Mammary epithelial cell (primary cell): ENCODE measurements at regions of chr19 and their contacts with region 1.

Region 1: GRCh38 chr19:31214086-31214485 is 135.2 kb downstream of the TSHZ3 start:
- DNase-seq: peak; percentile 99
- H3K4me3 ChIP-seq: no peak overlapping the region
- H3K27ac ChIP-seq: peak overlapping the region; percentile 77
- H3K4me1 ChIP-seq: peaks cover 20% of the 10 kb centered on the region
- H3K27me3 ChIP-seq: no peaks in the 10 kb centered on the region
- CTCF ChIP-seq: no peak

Region 2: GRCh38 chr19:31254180-31254551 is 40.1 kb after region 1 on chr19:
- CTCF ChIA-PET with region 1: no interaction called
- dilution Hi-C with region 1: no loop called
- in situ Hi-C with region 1: no loop called
- intact Hi-C with region 1: loop called (anchors 2 kb)
- DNase-seq: peak; percentile 86
- H3K4me3 ChIP-seq: no peak overlapping the region
- H3K27ac ChIP-seq: no peak overlapping the region
- H3K4me1 ChIP-seq: peaks cover 17% of the 10 kb centered on the region
- H3K27me3 ChIP-seq: no peaks in the 10 kb centered on the region
- CTCF ChIP-seq: no peak

Region 3: DNA sequence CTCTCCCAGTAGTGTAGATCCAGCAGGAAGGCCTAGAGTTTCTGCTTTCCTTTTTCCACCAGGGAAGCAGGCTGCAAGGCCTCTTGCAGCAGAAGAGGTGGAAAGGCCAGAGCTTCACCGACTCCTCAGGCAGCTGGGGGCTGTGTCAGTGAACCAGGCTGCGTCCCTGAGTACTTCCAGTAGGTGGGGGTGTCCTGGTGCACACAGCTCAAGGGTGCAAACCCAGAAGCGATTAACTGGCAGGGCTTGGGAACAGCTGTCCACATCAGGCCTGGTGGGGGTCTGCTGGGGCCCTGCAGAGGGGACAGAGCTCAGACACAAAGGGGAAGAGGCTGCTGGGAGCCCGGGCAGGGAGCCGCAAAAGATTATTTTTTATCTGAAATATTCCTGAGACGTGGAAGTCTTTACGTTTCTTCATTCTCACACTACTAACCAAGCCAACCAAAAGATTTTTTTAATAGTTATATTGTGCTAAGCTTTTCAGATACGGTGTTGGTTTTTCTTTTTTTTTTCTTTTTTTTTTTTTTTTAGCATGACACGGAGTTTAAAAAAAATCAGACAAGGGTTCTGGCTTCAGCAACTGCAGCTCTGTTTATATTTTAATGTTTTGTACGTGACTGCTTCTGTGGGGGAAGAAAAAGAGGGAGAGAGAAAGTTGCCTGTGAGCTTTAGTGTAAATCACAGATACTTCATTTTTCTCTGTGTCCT is 124.1 kb after region 1 on chr19:
- CTCF ChIA-PET with region 1: no interaction called
- dilution Hi-C with region 1: loop called (anchors 5 kb)
- in situ Hi-C with region 1: no loop called
- intact Hi-C with region 1: no loop called
- DNase-seq: no peak
- H3K4me3 ChIP-seq: no peak overlapping the region
- H3K27ac ChIP-seq: no peak overlapping the region
- H3K4me1 ChIP-seq: peaks cover 45% of the 10 kb centered on the region
- H3K27me3 ChIP-seq: no peaks in the 10 kb centered on the region
- CTCF ChIP-seq: peak; percentile 40 to 48